ENCODE measurements at regions of chr4 and their contacts with region 1.

Region 1: GRCh38 chr4:121484633-121485032 is 103.8 kb upstream of the QRFPR start:
- H3K4me3 Mint-ChIP-seq: no peak overlapping the region
- H3K27ac Mint-ChIP-seq: no peak overlapping the region
- H3K4me1 Mint-ChIP-seq: peaks cover 8% of the 10 kb centered on the region
- H3K27me3 Mint-ChIP-seq: no peaks in the 10 kb centered on the region

Region 2: DNA sequence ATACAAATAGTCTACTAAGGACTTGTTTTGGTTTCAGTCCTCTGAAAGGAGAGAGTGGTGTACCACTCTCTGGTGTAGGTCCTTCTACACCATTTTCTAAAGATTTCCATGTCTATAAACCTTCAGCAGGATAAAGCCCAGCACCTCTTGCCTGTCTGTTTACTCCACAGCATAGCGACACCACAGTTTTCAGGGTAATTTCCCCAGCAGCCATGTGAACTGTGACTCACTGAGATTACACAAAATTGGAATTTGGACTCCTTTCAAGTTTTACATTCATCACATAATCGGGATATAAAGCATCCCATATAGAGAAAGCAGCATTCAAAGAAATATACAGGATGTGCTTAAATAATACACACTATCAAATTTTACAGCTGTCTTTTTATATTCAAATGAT is 791.7 kb before region 1 on chr4:
- intact Hi-C with region 1: no loop called
- H3K4me3 Mint-ChIP-seq: no peak overlapping the region
- H3K27ac Mint-ChIP-seq: no peak overlapping the region
- H3K4me1 Mint-ChIP-seq: no peaks in the 10 kb centered on the region
- H3K27me3 Mint-ChIP-seq: no peaks in the 10 kb centered on the region

Region 3: DNA sequence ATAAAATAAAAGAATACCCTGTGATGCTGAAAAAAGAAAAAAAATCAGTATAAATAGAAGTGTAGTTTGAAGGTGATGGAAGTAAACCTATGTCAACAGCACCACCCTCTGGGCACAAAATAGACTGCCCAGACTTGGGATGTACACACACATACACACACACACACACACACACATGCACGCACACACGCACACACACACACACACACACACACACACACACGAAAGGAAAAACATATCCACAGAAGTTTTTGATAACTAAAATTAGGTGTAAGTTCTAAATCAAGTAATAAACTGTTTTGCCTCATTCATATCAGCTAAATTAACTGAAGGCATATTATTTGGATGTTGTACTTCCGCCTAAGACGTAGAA is 171.6 kb after region 1 on chr4:
- intact Hi-C with region 1: loop called (anchors 10 kb)
- H3K4me3 Mint-ChIP-seq: no peak overlapping the region
- H3K27ac Mint-ChIP-seq: no peak overlapping the region
- H3K4me1 Mint-ChIP-seq: no peaks in the 10 kb centered on the region
- H3K27me3 Mint-ChIP-seq: no peaks in the 10 kb centered on the region

Region 4: GRCh38 chr4:121736735-121737351 is 252.2 kb after region 1 on chr4:
- intact Hi-C with region 1: loop called (anchors 1 kb)
- H3K4me3 Mint-ChIP-seq: no peak overlapping the region
- H3K27ac Mint-ChIP-seq: no peak overlapping the region
- H3K4me1 Mint-ChIP-seq: no peaks in the 10 kb centered on the region
- H3K27me3 Mint-ChIP-seq: peaks cover 7% of the 10 kb centered on the region

Measured in dendritic cell treated with granulocyte-macrophage colony-stimulating factor and Interleukin-4, amounts not matched to agents 40 ng/mL and 50 ng/mL, for 4 days (primary cell).